ENCODE measurements at regions of chr20 and their contacts with region 1.

Region 1: GRCh38 chr20:35454881-35455609 is at the start of gene CEP250:
- DNase-seq: peak; percentile 97
- total RNA-seq, gene CEP250: 20.4 to 22.2 TPM

Region 2: GRCh38 chr20:35226775-35227681 is 228.0 kb before region 1 on chr20:
- intact Hi-C with region 1: no loop called
- DNase-seq: peak; percentile 85

Region 3: DNA sequence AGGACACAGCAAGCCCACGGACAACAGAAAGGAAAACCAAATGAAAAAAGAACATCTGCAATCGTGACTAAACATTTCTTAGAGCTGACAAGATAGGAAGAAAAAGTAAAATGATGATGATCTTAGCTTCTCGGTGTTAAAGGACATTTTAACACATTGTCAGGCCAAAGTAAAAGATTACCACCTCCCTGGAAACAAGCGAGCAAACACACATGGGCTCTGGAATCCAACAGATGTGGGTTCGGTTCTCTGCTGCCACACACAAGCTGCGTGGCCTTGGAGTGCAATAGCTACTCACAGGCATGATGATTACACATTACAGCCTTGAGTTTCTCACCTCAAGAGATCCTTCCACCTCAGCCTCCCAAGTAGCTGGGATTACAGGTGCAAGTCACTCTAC is 773.7 kb after region 1 on chr20:
- intact Hi-C with region 1: loop called in 1 of 2 experiments (anchors 5 kb)
- DNase-seq: no peak

Measured in posterior vena cava (tissue), 2 donors.